Prostate gland (tissue), 2 donors: ENCODE measurements at regions of chr6 and their contacts with region 1.

Region 1: GRCh38 chr6:32984605-32985389 is 16.4 kb downstream of the BRD2 start:
- DNase-seq: peak; percentile 97
- H3K4me3 ChIP-seq: no peak overlapping the region
- H3K27ac ChIP-seq: peak overlapping the region; percentile 11 to 49
- H3K4me1 ChIP-seq: peaks cover 11% of the 10 kb centered on the region
- H3K27me3 ChIP-seq: no peaks in the 10 kb centered on the region
- CTCF ChIP-seq: peak; percentile 86 to 95 (median 92)
- POLR2A ChIP-seq: no peak

Region 2: DNA sequence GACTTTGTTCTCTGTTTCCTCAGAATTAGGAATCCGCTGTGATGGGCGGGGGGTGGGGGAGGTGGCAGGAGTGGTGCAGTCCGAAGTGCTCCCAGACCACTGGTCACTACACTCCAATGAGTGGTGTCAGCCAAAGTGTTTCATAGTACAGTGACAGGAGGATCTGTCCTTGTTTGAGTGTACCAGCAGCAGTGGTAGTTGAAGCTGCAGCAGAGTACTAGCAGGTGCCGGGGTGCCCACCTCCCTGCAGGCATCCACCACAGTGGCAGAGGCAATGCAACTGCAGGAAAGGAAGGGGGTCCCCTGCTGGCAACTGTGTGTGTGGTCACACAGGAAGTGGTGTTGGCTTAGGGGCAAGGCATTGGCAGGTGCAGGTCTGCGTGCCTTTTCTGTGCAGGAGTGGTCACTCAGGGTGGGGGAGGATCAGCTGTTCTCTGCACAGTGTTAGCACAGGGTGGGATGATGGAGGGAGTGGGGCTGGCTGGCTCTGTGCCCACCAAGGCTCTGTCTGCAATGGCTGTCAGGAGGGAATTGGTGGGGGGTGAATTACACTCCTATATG is 177.7 kb before region 1 on chr6:
- intact Hi-C with region 1: no loop called
- DNase-seq: no peak
- H3K4me3 ChIP-seq: no peak overlapping the region
- H3K27ac ChIP-seq: no peak overlapping the region
- H3K4me1 ChIP-seq: no peaks in the 10 kb centered on the region
- H3K27me3 ChIP-seq: no peaks in the 10 kb centered on the region
- CTCF ChIP-seq: no peak
- POLR2A ChIP-seq: no peak

Region 3: DNA sequence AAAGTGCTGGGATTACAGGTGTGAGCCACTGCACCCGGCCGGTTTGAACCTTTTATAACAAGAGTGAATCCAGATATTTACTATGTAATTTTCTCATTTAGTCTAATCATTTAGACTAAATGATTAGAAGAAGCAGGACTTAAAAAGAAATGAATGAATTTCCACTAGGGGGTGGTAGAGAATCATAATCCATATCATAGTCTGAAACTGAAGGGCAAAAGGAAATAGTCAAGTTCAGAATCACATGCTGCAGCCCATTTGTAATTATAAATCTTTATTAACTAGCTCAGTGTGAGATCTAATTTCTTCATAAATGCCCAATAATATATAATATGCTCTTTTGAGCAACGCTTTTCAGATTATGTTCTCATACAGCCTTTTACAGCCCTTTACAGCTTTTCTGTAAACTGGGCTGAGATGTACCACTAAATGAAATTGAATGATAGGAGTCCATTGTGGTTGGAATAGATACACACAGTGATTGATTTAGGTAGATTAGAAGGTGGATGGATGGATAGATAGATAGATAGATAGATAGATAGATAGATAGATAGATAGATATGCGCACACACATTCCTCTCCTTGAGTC is 99.0 kb before region 1 on chr6:
- intact Hi-C with region 1: loop called (anchors 5 kb)
- DNase-seq: no peak
- H3K4me3 ChIP-seq: no peak overlapping the region
- H3K27ac ChIP-seq: no peak overlapping the region
- H3K4me1 ChIP-seq: no peaks in the 10 kb centered on the region
- H3K27me3 ChIP-seq: no peaks in the 10 kb centered on the region
- CTCF ChIP-seq: peak; percentile 36 to 85 (median 76)
- POLR2A ChIP-seq: no peak

Region 4: GRCh38 chr6:32933636-32934085 is 51.1 kb before region 1 on chr6:
- intact Hi-C with region 1: loop called (anchors 2 kb)
- DNase-seq: peak; percentile 74
- H3K4me3 ChIP-seq: no peak overlapping the region
- H3K27ac ChIP-seq: no peak overlapping the region
- H3K4me1 ChIP-seq: no peaks in the 10 kb centered on the region
- H3K27me3 ChIP-seq: no peaks in the 10 kb centered on the region
- CTCF ChIP-seq: peak; percentile 67 to 80 (median 72)
- POLR2A ChIP-seq: no peak